Lower leg skin (tissue), 4 donors: ENCODE measurements at regions of chr1 and their contacts with region 1.

Region 1: DNA sequence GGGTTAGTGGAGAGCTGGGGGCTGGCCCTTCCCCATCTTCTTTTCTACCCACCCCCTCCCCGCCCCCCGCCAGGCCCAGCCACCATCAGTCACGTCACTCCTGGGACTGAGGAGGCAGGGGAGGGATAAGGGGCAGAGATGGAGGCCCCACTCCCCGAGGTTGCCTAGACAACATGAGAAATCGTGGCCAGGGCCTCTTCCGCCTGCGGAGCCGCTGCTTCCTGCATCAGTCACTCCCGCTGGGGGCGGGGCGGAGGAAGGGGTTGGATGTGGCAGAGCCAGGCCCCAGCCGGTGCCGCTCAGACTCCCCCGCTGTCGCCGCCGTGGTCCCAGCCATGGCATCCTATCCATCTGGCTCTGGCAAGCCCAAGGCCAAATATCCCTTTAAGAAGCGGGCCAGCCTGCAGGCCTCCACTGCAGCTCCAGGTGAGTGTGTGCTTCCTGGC is 1.2 kb downstream of the AMPD2 start:
- DNase-seq: peak; percentile 86 to 98
- H3K4me3 ChIP-seq: peak overlapping the region; percentile 44
- CTCF ChIP-seq: no peak
- POLR2A ChIP-seq: no peak

Region 2: GRCh38 chr1:109548321-109549267 is 72.3 kb before region 1 on chr1 and contains the start of gene GNAI3:
- intact Hi-C with region 1: loop called (anchors 10 kb)
- DNase-seq: peak; percentile 98 to 100
- H3K4me3 ChIP-seq: peak within 1 kb of the TSS; percentile 83
- CTCF ChIP-seq: no peak
- POLR2A ChIP-seq: peak in 1 of 2 donors; percentile 80
- total RNA-seq, gene GNAI3: 8.5 to 13.2 (median 10.7) TPM

Region 3: DNA sequence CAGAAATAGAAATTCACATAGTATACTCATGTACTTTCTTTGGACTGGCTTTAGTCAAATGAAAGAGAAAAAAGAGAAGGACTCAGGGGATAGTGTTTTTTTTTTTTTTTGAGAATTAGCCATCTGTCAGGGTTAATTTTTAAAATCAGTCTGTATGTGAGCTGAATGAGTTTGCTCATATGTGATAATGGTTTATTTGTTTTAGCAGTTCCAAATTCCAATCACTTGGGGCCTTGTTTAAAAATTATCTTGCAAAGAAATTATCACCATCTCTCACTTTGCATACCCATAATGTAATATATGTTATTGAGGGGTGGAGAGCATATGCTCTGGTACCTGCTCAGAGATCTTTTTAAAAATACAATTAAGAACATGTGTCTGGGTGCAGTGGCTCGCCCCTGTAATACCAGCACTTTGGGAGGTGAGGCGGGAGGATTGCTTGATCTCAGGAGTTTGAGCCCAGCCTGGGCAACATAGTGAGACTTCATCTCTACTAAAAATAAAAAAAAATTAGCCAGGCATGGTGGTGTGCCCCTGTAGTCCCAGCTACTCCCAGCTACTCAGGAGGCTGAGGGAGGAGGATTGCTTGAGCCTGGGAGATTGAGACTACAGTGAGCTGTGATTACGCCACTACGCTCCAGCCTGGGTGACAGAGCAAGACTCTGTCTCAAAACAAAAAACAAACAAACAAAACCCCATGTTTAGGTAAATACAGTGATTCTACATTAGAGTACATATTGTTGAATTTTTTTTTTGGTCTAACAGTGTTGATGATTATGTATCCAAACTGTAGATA is 52.8 kb before region 1 on chr1:
- intact Hi-C with region 1: loop called (anchors 10 kb)
- DNase-seq: no peak
- H3K4me3 ChIP-seq: no peak overlapping the region
- CTCF ChIP-seq: no peak
- POLR2A ChIP-seq: no peak

Region 4: GRCh38 chr1:109807822-109808680 is 187.2 kb after region 1 on chr1:
- intact Hi-C with region 1: no loop called
- DNase-seq: no peak
- H3K4me3 ChIP-seq: no peak overlapping the region
- CTCF ChIP-seq: no peak
- POLR2A ChIP-seq: no peak